Caki2 (cell line): ENCODE measurements at regions of chr3 and their contacts with region 1.

Region 1: GRCh38 chr3:123816673-123817207 is 67.4 kb downstream of the MYLK start:
- DNase-seq: no peak

Region 2: DNA sequence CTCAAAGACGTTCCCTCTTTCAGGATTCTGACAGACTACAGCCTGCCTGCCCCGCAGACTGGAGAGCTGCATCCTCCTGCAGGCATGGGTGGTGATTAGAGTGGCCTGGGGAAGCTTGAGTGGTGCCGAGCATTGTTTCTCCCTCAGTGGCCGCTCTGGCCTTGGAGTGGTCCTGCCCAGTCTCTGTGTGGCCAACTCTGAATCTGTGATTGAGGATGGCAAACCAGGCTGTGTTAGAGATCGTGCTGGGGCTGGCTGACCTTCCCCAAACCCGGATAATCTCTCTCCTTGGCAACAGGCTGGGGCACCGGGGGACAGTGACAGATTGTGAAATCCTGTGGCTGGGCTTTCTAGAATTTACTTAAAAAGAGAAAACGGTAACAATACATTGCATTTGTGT is 356.9 kb before region 1 on chr3:
- in situ Hi-C with region 1: no loop called
- DNase-seq: no peak

Region 3: DNA sequence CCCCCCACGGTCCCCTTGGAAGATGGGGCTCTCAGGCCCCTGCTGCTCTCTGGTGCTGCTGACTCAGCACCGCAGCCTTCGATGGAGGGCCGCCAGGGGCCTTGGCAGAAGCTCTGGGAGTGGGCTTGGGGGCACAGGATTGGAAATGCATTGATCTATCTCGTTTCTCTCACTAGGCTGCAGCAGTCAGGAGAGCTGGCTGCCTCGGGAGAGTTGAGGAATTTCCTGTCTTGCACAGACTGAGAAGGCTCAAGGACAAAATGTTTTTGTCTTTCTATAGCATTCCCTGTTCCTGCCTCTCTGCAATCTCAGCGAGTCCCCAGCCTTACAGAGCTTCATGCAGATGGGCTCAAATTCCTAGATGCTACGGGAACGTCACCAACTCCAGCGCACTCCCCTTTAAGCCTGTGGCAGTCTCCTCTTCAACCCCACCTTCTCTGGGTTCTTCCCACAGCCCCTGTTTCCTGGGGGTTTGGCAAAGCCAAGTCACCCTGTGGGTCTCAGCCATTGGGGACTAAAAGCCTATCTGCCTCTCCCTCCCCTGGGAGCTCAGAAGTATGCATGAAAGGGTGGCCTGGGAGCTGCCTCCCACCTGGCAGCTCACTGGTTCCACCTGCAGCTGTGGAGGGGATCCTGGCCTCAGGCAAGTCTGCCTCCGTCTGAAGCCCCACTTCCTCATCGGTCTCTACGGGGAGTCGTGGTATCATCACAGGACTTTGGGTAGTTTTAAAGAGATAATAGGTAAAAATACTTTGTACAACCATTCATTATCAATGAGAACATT is 104.5 kb before region 1 on chr3:
- in situ Hi-C with region 1: no loop called
- DNase-seq: no peak

Region 4: DNA sequence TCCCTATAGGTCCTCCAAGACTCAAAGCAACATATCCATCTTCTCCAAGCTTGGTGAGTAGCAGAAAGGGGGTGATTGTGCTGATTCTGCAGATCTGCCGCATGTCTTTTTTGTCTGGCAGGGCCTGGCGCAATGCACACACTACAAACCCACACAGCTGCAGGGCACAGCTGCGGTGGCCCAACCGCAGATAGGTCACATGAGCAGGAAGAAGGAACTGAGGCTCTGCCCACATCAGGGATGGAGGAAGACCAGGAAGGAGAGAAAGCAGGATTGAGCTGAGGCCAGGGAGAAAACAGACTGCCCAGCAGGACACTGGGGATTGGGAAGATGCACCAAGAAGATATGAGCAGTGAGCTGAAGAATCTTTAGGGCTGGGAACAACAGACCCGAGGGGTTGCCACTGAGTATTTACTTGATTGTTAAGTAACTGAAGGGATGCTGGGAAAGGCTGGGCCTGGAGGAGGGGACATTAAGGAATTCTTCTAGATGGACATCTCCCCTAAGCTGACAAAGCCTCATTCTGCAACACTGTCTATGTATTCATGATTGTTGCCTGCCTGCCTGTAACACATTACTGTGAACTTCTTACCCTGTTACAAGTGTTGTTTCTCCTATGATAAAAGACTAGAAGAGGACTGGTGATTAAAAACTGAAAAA is 59.3 kb before region 1 on chr3:
- in situ Hi-C with region 1: loop called (anchors 10 kb)
- DNase-seq: peak; percentile 33